ENCODE measurements at regions of chr2 and their contacts with region 1.

Region 1: DNA sequence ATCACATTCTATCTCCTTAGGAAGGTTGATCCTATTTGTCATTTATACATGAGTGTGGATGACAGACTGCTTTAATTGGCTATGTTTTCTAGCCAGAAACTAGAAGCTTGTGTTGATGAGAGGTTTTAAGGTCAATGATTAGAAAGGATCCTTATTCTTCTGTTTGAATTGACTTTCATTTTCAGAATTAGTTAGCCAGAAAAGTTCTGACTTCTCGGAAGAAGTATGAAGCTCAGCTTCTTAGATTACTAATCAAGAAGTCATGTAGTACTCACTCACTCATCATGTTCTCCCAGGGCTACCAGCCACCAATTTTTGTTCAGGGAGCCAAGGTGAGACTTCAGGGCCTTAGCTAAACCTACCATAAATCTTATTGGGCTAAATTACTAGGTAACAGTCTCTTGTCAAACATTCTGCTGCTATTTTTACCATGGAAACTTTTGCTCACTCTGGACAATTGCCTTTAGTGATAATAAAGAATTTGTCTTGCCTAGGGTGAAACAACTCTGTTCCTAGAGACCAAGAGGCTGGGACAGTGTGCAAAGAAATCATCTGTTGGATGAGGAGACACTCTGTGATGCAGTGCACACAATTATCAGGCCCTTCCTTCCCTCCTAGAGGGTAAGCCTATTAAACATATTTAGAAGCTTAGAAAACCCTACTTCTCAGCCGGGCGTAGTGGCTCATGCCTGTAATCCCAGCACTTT is 111.6 kb upstream of the DNMT3A start:
- DNase-seq: peak; percentile 73
- H3K4me3 Mint-ChIP-seq: peak overlapping the region; percentile 6
- H3K27ac Mint-ChIP-seq: peak overlapping the region; percentile 90
- H3K4me1 Mint-ChIP-seq: peaks cover 29% of the 10 kb centered on the region
- H3K27me3 Mint-ChIP-seq: no peaks in the 10 kb centered on the region

Region 2: DNA sequence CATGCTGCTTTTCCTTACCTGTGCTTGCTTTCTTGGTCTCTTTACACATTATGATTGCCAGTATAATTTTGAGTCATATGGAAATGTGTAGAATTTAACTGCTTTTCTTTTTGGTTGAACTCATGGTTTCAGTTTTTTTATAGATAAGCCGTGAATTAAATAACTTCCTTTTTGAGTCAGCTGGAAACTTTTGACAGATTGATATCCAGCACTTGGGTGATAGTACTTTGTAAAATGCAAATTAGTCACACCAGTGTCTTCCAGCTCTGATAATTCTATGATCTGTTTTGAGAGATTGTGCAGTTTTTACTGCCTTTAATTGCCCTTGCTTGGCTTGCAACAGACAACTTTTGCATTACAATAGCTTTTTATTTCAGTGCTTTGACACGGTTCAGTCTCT is 875.9 kb before region 1 on chr2:
- CTCF ChIA-PET with region 1: no interaction called
- intact Hi-C with region 1: loop called (anchors 5 kb)
- DNase-seq: no peak
- H3K4me3 Mint-ChIP-seq: no peak overlapping the region
- H3K27ac Mint-ChIP-seq: peak overlapping the region; percentile 69
- H3K4me1 Mint-ChIP-seq: peaks cover 74% of the 10 kb centered on the region
- H3K27me3 Mint-ChIP-seq: no peaks in the 10 kb centered on the region

Region 3: GRCh38 chr2:25342372-25343186 is 110.8 kb before region 1 on chr2:
- CTCF ChIA-PET with region 1: no interaction called
- intact Hi-C with region 1: loop called (anchors 5 kb)
- DNase-seq: peak; percentile 82
- H3K4me3 Mint-ChIP-seq: peak overlapping the region; percentile 80
- H3K27ac Mint-ChIP-seq: peak overlapping the region; percentile 71
- H3K4me1 Mint-ChIP-seq: peaks cover 37% of the 10 kb centered on the region
- H3K27me3 Mint-ChIP-seq: no peaks in the 10 kb centered on the region

Region 4: GRCh38 chr2:25437881-25438662 is 15.3 kb before region 1 on chr2:
- CTCF ChIA-PET with region 1: no interaction called
- intact Hi-C with region 1: no loop called
- DNase-seq: no peak
- H3K4me3 Mint-ChIP-seq: no peak overlapping the region
- H3K27ac Mint-ChIP-seq: no peak overlapping the region
- H3K4me1 Mint-ChIP-seq: no peaks in the 10 kb centered on the region
- H3K27me3 Mint-ChIP-seq: no peaks in the 10 kb centered on the region

Region 5: GRCh38 chr2:25467734-25468133 is 14.4 kb after region 1 on chr2:
- CTCF ChIA-PET with region 1: no interaction called
- intact Hi-C with region 1: no loop called
- DNase-seq: no peak
- H3K4me3 Mint-ChIP-seq: no peak overlapping the region
- H3K27ac Mint-ChIP-seq: no peak overlapping the region
- H3K4me1 Mint-ChIP-seq: no peaks in the 10 kb centered on the region
- H3K27me3 Mint-ChIP-seq: no peaks in the 10 kb centered on the region

Region 6: GRCh38 chr2:25514043-25514637 is 60.8 kb after region 1 on chr2:
- CTCF ChIA-PET with region 1: interaction called, 6 read pairs
- intact Hi-C with region 1: loop called (anchors 2 kb)
- DNase-seq: no peak
- H3K4me3 Mint-ChIP-seq: no peak overlapping the region
- H3K27ac Mint-ChIP-seq: peak overlapping the region; percentile 54
- H3K4me1 Mint-ChIP-seq: peaks cover 11% of the 10 kb centered on the region
- H3K27me3 Mint-ChIP-seq: no peaks in the 10 kb centered on the region

Region 7: GRCh38 chr2:25558262-25558661 is 104.9 kb after region 1 on chr2:
- CTCF ChIA-PET with region 1: no interaction called
- intact Hi-C with region 1: loop called (anchors 1 kb)
- DNase-seq: peak; percentile 58
- H3K4me3 Mint-ChIP-seq: no peak overlapping the region
- H3K27ac Mint-ChIP-seq: peak overlapping the region; percentile 35
- H3K4me1 Mint-ChIP-seq: peaks cover 52% of the 10 kb centered on the region
- H3K27me3 Mint-ChIP-seq: no peaks in the 10 kb centered on the region

Region 8: GRCh38 chr2:25822190-25823117 is 369.1 kb after region 1 on chr2:
- CTCF ChIA-PET with region 1: no interaction called
- intact Hi-C with region 1: loop called (anchors 1 kb)
- DNase-seq: peak; percentile 83
- H3K4me3 Mint-ChIP-seq: peak overlapping the region; percentile 71
- H3K27ac Mint-ChIP-seq: peak overlapping the region; percentile 52
- H3K4me1 Mint-ChIP-seq: peaks cover 63% of the 10 kb centered on the region
- H3K27me3 Mint-ChIP-seq: no peaks in the 10 kb centered on the region

Measured in activated naive CD4-positive, alpha-beta T cell treated with anti-CD3 and anti-CD28 coated beads for 36 hours (primary cell).